PC-9 (cell line): ENCODE measurements at regions of chr1 and their contacts with region 1.

Region 1: GRCh38 chr1:97906567-97907241 is 14.1 kb downstream of the DPYD start:
- DNase-seq: peak; percentile 48 to 52
- H3K4me3 ChIP-seq: no peak overlapping the region
- H3K27ac ChIP-seq: no peak overlapping the region
- H3K4me1 ChIP-seq: peaks cover 17% of the 10 kb centered on the region
- H3K27me3 ChIP-seq: no peaks in the 10 kb centered on the region
- CTCF ChIP-seq: no peak

Region 2: DNA sequence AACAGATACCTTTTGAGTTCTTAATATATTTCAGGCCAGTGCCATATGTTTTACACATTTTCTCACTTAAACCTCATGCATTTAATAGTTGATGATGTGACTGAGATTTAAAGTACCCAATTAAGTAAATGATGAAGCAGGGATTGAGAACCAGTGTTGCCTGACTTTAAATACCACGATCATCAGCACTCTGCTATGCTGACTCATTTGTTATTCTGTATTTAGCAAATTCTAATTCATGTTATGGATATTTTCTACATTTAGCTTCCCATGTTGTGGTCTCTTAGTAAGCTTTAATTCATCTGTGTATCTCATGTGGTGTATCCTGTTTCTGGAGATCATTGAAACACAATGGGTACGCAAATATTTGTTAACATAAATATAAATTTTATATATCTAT is 822.2 kb before region 1 on chr1:
- CTCF ChIA-PET with region 1: no interaction called
- POLR2A ChIA-PET with region 1: interaction called, 14 read pairs
- intact Hi-C with region 1: no loop called
- DNase-seq: no peak
- H3K4me3 ChIP-seq: no peak overlapping the region
- H3K27ac ChIP-seq: no peak overlapping the region
- H3K4me1 ChIP-seq: no peaks in the 10 kb centered on the region
- H3K27me3 ChIP-seq: no peaks in the 10 kb centered on the region
- CTCF ChIP-seq: no peak

Region 3: GRCh38 chr1:97758541-97759057 is 148.1 kb before region 1 on chr1:
- CTCF ChIA-PET with region 1: no interaction called
- POLR2A ChIA-PET with region 1: no interaction called
- intact Hi-C with region 1: no loop called
- DNase-seq: no peak
- H3K4me3 ChIP-seq: no peak overlapping the region
- H3K27ac ChIP-seq: no peak overlapping the region
- H3K4me1 ChIP-seq: no peaks in the 10 kb centered on the region
- H3K27me3 ChIP-seq: no peaks in the 10 kb centered on the region
- CTCF ChIP-seq: no peak